CD4-positive, alpha-beta T cell (primary cell): ENCODE measurements at regions of chr19 and their contacts with region 1.

Region 1: DNA sequence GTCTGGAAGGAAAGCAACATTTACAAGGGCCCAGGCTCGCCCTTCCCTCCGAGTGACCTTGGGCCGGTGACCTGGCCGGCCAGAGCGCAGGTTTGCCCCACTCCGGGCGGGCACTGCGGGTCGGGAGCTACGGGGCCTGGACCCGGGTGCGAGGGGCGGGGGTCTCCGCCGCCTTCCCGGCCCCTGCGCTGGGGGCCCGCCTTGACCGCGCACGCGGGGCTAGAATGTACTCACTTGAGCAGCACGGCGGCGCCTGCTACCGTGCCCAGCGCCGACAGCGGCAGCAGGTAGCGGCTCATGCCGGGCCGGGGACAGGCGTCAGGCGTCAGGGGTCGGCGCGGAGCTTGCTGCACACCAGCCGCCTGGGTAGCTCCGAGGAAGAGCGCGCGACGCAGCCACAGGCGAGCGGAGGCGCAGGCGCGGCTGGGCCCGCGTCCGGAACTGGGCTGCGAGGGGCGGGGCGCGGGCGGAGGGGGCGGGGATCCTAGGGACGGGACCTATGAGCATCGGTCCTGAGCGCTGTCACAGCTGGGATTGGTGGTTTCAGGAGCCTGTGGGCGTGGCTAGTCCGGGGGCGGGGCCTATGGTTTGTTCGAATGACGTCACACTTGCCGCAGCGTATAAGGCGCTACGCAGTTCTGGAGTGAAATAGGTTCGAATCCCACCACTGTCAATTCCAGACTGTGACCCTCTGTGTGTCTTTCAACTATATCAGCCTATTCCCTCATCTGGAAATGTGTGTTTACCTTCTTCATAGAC is at the start of gene RDH13:
- DNase-seq: peak; percentile 95 to 99 (median 97)
- ATAC-seq: peak; percentile 99
- H3K4me3 ChIP-seq: peak within 1 kb of the TSS; percentile 60
- H3K4me3 Mint-ChIP-seq: peak within 1 kb of the TSS; percentile 82
- H3K27ac ChIP-seq: peak within 1 kb of the TSS; percentile 21 to 29
- H3K27ac Mint-ChIP-seq: peak within 1 kb of the TSS; percentile 73
- H3K4me1 ChIP-seq: peaks cover 22% of the 10 kb centered on the region
- H3K4me1 Mint-ChIP-seq: peaks cover 5% of the 10 kb centered on the region
- H3K27me3 ChIP-seq: peaks cover 10 to 18% of the 10 kb centered on the region in 2 experiments
- H3K27me3 Mint-ChIP-seq: peaks cover 25% of the 10 kb centered on the region
- CTCF ChIP-seq: no peak
- total RNA-seq, gene RDH13: 7.4 to 8.8 TPM

Region 2: DNA sequence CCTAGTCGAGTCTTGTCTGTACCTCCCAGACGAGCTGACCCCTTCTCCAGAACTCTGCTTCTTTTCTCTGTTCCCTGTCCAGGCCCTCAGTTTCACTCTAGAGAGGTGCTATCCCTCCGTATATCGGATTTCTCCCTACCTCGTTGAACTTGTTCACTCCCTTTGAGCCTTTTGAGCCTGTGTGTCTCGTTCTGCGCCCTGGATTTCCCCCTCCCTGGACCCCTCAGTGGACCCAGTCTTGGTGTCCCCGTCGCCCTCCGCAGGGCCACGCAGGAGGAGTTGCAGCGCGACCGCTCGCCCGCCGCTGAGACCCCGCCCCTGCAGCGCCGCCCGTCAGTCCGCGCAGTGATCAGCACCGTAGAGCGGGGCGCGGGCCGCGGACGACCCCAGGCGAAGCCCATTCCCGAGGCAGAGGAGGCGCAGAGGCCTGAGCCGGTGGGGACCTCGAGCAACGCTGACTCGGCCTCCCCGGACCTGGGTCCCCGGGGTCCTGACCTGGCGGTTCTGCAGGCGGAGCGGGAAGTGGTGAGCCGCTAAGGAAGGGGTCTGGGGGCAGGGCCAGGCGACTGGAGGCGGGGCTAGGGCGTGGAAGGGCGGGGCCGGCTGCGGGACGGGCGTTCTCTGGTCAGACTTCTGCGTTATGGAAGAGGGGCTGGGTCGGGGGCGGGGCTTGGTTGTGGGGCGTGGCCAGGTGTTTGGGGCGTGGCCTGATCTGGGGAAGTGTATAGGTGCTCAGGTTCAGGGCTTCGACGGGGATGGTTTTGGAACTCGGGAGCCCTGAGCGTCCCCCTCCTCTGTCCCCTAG is 18.3 kb after region 1 on chr19:
- CTCF ChIA-PET with region 1: no interaction called
- POLR2A ChIA-PET with region 1: interaction called, 9 read pairs
- intact Hi-C with region 1: loop called in 1 of 2 experiments (anchors 2 kb)
- DNase-seq: peak; percentile 74 to 95 (median 86)
- ATAC-seq: peak; percentile 71
- H3K4me3 ChIP-seq: peak overlapping the region; percentile 57
- H3K4me3 Mint-ChIP-seq: peak overlapping the region; percentile 85
- H3K27ac ChIP-seq: no peak overlapping the region
- H3K27ac Mint-ChIP-seq: peak overlapping the region; percentile 49
- H3K4me1 ChIP-seq: peaks cover 35% of the 10 kb centered on the region
- H3K4me1 Mint-ChIP-seq: peaks cover 25% of the 10 kb centered on the region
- H3K27me3 ChIP-seq: peaks cover 34 to 51% of the 10 kb centered on the region in 2 experiments
- H3K27me3 Mint-ChIP-seq: peaks cover 82% of the 10 kb centered on the region
- CTCF ChIP-seq: no peak